ENCODE measurements at regions of chr14 and their contacts with region 1.

Region 1: DNA sequence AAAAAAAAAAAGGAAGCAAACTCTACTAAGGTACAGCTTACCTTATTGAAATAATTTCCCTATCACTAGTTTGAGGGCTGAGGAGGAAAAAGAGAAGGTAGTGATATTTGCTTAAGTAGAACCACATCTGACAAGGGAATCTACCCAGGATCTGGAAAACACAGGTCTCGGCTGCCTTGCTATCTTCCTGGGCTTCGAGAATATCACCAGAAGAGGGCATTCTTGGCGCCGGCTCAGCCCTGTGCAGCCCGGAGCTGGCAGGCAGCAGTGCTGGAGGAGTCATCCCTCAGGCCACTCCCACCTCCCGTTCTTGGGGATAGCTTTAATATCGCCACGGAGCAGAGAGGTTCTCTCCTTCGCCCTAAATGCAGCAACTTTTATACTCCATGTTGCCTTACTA is 1181.2 kb downstream of the VRK1 start:
- DNase-seq: peak; percentile 74
- ATAC-seq: peak; percentile 86
- H3K4me3 Mint-ChIP-seq: peak overlapping the region; percentile 82
- H3K27ac Mint-ChIP-seq: peak overlapping the region; percentile 90
- H3K4me1 Mint-ChIP-seq: peaks cover 50% of the 10 kb centered on the region
- H3K27me3 Mint-ChIP-seq: no peaks in the 10 kb centered on the region

Region 2: GRCh38 chr14:97724265-97724731 is 254.0 kb before region 1 on chr14:
- POLR2A ChIA-PET with region 1: interaction called, 13 read pairs
- DNase-seq: peak; percentile 58
- ATAC-seq: peak; percentile 96
- H3K4me3 Mint-ChIP-seq: peak overlapping the region; percentile 82
- H3K27ac Mint-ChIP-seq: peak overlapping the region; percentile 97
- H3K4me1 Mint-ChIP-seq: peaks cover 52% of the 10 kb centered on the region
- H3K27me3 Mint-ChIP-seq: no peaks in the 10 kb centered on the region

Region 3: DNA sequence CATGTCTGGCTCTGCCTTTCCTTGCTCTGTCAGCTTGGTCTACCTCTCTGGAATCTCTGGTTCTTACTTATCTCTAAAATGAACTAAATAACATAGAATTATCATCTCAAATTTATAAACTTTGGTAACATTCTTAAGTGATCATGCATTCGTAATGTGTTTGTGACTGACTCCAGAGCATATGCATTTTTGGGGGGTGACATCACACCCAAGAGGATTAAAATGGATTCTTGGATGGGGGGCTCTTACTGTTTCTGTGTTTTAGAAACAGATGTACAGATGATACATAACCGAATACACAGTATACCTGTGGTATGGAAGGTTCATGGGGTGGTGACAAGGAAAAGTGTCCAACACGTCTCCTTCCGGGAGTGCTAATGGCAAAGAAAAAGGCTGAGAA is 19.1 kb before region 1 on chr14:
- POLR2A ChIA-PET with region 1: no interaction called
- DNase-seq: no peak
- ATAC-seq: no peak
- H3K4me3 Mint-ChIP-seq: no peak overlapping the region
- H3K27ac Mint-ChIP-seq: no peak overlapping the region
- H3K4me1 Mint-ChIP-seq: peaks cover 3% of the 10 kb centered on the region
- H3K27me3 Mint-ChIP-seq: no peaks in the 10 kb centered on the region

Region 4: GRCh38 chr14:98014851-98015615 is 36.7 kb after region 1 on chr14:
- POLR2A ChIA-PET with region 1: interaction called, 12 read pairs
- DNase-seq: no peak
- ATAC-seq: no peak
- H3K4me3 Mint-ChIP-seq: no peak overlapping the region
- H3K27ac Mint-ChIP-seq: peak overlapping the region; percentile 27
- H3K4me1 Mint-ChIP-seq: peaks cover 62% of the 10 kb centered on the region
- H3K27me3 Mint-ChIP-seq: no peaks in the 10 kb centered on the region

Region 5: GRCh38 chr14:98035396-98035795 is 57.1 kb after region 1 on chr14:
- POLR2A ChIA-PET with region 1: no interaction called
- DNase-seq: no peak
- ATAC-seq: no peak
- H3K4me3 Mint-ChIP-seq: no peak overlapping the region
- H3K27ac Mint-ChIP-seq: no peak overlapping the region
- H3K4me1 Mint-ChIP-seq: no peaks in the 10 kb centered on the region
- H3K27me3 Mint-ChIP-seq: no peaks in the 10 kb centered on the region

Region 6: DNA sequence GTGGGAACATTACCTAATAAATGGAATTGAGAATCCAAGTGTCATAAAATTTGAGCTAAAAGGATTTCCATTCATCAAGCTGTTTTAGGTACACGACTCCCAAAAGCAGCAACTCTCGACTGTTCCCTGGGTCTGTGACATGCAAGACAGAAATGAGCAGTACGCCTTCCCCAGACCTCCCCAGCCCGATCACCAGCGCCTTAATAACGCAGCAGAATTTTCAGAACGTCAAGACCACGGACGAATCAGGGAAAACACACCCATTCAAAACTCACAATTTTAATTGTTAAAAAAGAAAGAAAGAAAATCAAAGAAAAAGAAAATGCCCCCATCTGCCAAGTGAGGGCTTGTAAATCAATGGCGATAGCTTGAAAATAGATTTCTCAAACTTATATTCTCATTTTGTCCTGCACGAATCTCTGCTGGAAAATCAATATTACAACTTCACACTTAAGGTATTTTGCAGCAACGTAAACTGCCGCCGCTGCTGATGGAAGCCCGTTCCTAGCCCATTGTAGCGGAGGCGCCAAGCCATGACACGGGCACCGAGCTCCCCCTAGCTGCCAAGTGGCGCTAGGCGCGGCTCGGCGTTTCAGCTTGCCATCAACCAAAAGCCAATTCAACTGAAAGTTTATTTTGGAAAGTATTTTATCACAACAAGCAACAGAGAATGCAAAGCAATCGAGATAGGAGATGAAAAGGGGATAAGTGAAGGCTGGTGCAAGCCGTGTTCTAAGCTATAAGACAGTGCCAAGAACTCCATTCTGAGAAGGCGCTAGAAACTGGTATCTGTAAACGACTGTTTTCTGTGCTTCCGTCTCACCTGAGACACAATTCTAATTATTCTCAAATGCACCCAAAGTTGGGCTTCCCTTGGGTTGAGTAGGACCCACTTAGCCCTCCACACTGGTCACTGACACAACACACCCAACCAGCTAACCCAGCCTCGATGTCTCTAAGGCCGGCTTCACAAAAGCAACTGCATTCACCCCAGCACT is 1288.1 kb after region 1 on chr14:
- POLR2A ChIA-PET with region 1: interaction called, 14 read pairs
- DNase-seq: peak; percentile 90
- ATAC-seq: peak; percentile 20
- H3K4me3 Mint-ChIP-seq: peak overlapping the region; percentile 98
- H3K27ac Mint-ChIP-seq: peak overlapping the region; percentile 99
- H3K4me1 Mint-ChIP-seq: peaks cover 56% of the 10 kb centered on the region
- H3K27me3 Mint-ChIP-seq: no peaks in the 10 kb centered on the region

Measured in activated naive CD8-positive, alpha-beta T cell treated with anti-CD3 and anti-CD28 coated beads, Interleukin-2, amount 10 ng/mL, durations not matched to agents 7 days and 5 days (primary cell).